Gastrocnemius medialis (tissue), 4 donors: ENCODE measurements at regions of chr9 and their contacts with region 1.

Region 1: GRCh38 chr9:125631391-125632085 is 75.5 kb downstream of the MAPKAP1 start:
- DNase-seq: no peak
- ATAC-seq: no peak
- H3K4me3 ChIP-seq: no peak overlapping the region
- H3K27ac ChIP-seq: no peak overlapping the region
- H3K4me1 ChIP-seq: peaks cover 17 to 33% of the 10 kb centered on the region in 2 donors
- H3K27me3 ChIP-seq: no peaks in the 10 kb centered on the region
- CTCF ChIP-seq: peak in 3 of 5 experiments; percentile 15 to 34 (median 32)
- POLR2A ChIP-seq: no peak

Region 2: DNA sequence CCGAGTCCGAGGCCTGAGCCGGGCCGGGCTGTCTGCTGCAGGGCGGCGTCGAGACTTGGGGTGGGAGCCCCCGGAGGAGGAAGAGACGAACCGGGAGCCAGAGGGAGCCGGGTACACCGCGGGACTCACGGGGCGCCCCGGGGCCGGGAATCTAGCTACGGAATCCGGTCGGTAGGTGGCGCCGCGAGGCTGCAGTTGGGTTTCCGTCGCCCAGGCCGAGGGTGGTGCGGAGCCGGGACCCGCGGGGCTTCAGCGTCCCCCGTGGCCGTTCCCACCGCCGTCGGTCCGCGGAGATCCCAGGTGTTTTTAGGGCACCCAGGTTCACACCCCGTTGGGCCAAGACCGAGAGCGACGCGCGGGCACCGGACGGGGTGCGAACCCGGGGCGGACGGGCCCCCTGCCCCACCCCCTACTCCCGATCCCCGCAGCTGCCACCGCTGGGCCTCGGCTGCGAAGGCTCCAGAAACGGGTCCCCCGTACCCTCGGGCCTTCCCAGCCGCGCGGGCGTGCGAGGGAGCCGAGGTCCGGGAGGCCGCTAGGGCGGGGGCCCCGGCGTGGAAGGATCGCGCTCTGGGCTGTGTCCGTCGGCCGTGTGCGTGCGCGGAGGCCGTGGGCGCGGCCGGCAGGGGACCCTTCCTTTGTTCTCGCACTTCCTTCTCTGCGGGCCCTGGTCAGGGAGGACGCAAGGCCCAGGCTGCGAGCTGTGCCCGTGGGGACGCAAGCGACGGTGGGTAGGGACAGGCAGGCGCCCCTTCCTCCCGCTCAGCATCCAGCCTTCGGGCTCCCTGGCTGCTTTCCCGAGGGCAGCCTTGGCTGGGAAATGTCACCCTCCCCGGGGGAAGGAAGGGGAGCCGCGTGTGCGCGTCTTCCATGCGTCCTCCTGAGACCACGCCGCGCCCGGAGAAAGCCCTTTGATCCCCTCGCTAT is 223.3 kb before region 1 on chr9:
- in situ Hi-C with region 1: loop called in 2 of 4 experiments (anchors 25 kb)
- intact Hi-C with region 1: loop called (anchors 10 kb)
- DNase-seq: peak; percentile 30 to 34
- ATAC-seq: peak; percentile 65 to 73
- H3K4me3 ChIP-seq: peak overlapping the region; percentile 50 to 59 (median 54)
- H3K27ac ChIP-seq: no peak overlapping the region
- H3K4me1 ChIP-seq: peaks cover 3 to 8% of the 10 kb centered on the region in 2 donors
- H3K27me3 ChIP-seq: peaks cover 17 to 25% (median 24%) of the 10 kb centered on the region in 3 donors
- CTCF ChIP-seq: peak; percentile 24 to 85 (median 69)
- POLR2A ChIP-seq: no peak

Region 3: GRCh38 chr9:125558453-125559092 is 73.0 kb before region 1 on chr9:
- in situ Hi-C with region 1: no loop called
- intact Hi-C with region 1: loop called (anchors 1 kb)
- DNase-seq: peak; percentile 16 to 28
- ATAC-seq: peak; percentile 58 to 73
- H3K4me3 ChIP-seq: no peak overlapping the region
- H3K27ac ChIP-seq: no peak overlapping the region
- H3K4me1 ChIP-seq: peaks cover 6 to 8% of the 10 kb centered on the region in 2 donors
- H3K27me3 ChIP-seq: no peaks in the 10 kb centered on the region
- CTCF ChIP-seq: peak; percentile 50 to 72 (median 60)
- POLR2A ChIP-seq: no peak

Region 4: GRCh38 chr9:125612616-125613540 is 18.7 kb before region 1 on chr9:
- in situ Hi-C with region 1: no loop called
- intact Hi-C with region 1: no loop called
- DNase-seq: no peak
- ATAC-seq: peak in 1 of 2 donors; percentile 56
- H3K4me3 ChIP-seq: no peak overlapping the region
- H3K27ac ChIP-seq: no peak overlapping the region
- H3K4me1 ChIP-seq: peaks cover 3 to 7% of the 10 kb centered on the region in 2 donors
- H3K27me3 ChIP-seq: no peaks in the 10 kb centered on the region
- CTCF ChIP-seq: no peak
- POLR2A ChIP-seq: no peak